ENCODE measurements at regions of chr18 and their contacts with region 1.

Region 1: GRCh38 chr18:23918401-23919032 is 96.0 kb upstream of the TTC39C start:
- DNase-seq: peak; percentile 92
- ATAC-seq: peak; percentile 94
- H3K4me3 Mint-ChIP-seq: no peak overlapping the region
- H3K27ac Mint-ChIP-seq: no peak overlapping the region
- H3K4me1 Mint-ChIP-seq: peaks cover 6% of the 10 kb centered on the region
- H3K27me3 Mint-ChIP-seq: no peaks in the 10 kb centered on the region
- CTCF ChIP-seq: peak; percentile 94

Region 2: DNA sequence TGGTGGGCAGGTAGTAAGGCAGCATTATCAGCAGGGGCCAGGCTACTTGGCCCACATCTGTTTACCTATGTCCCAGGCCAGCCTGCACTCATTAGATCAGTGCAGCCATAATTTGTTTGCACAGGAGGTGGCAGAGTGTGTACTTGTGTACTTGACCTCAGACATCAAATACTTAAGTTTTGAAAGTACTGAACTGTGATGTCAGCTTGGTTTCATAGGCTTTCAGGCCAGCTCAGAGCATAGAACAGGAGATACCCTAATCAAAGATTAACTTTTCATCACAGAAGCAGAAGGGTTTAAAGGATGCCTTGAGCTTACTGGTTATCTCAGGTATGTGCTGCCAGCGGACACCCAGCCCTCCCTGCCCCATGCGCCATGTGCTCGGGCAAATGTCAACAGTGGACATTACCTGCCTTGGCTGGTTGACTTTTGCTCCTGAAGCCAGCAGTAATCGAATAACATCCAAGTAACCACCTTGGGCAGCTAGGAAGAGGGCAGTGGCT is 289.0 kb before region 1 on chr18:
- CTCF ChIA-PET with region 1: interaction called, 6 read pairs
- POLR2A ChIA-PET with region 1: no interaction called
- intact Hi-C with region 1: loop called (anchors 10 kb)
- DNase-seq: no peak
- ATAC-seq: peak; percentile 34
- H3K4me3 Mint-ChIP-seq: no peak overlapping the region
- H3K27ac Mint-ChIP-seq: no peak overlapping the region
- H3K4me1 Mint-ChIP-seq: peaks cover 12% of the 10 kb centered on the region
- H3K27me3 Mint-ChIP-seq: no peaks in the 10 kb centered on the region
- CTCF ChIP-seq: no peak

Region 3: GRCh38 chr18:23668731-23669130 is 249.8 kb before region 1 on chr18:
- CTCF ChIA-PET with region 1: no interaction called
- POLR2A ChIA-PET with region 1: no interaction called
- intact Hi-C with region 1: no loop called
- DNase-seq: no peak
- ATAC-seq: no peak
- H3K4me3 Mint-ChIP-seq: no peak overlapping the region
- H3K27ac Mint-ChIP-seq: no peak overlapping the region
- H3K4me1 Mint-ChIP-seq: peaks cover 6% of the 10 kb centered on the region
- H3K27me3 Mint-ChIP-seq: peaks cover 7% of the 10 kb centered on the region
- CTCF ChIP-seq: no peak

Region 4: DNA sequence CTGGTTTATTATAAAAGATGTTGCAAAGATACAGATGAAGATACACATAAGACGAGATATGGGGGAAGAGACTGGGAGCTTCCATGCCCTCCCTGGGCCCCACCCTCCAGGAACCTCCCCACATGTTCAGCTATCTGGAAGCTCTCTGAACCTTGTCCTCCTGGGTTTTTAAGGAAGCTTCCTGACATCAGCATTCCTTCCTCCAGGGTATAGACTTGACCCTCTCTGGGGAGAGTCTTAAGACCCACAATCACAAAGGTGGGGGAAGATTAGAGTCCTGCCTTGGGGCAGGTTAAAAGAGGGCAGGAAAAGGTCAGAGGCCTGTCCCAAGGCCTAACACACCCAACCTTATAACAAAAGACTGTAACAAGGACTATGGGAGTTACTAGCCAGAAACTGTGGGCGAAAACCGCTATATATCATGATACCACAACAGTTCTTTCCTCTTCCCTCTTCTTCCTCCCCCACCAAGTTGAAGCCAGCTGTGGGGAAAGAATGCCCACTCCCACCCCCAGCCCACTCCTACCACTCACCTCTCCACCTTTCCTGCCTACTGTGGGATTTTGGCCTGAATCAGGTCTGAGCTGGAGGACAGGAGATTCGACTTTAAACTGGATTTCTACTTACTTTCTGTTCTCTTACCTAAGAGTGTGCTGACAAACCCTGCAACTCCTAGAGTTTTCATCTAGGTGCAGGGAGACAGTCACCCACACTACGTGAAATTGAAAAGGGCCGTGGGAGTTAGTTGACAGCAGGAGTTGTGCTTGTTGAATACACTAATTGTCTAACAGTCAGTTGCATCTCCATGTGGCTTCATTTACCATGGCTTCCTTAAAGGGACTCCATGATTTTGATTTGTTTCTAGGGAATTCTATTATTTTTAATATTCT is 124.3 kb before region 1 on chr18:
- CTCF ChIA-PET with region 1: no interaction called
- POLR2A ChIA-PET with region 1: no interaction called
- intact Hi-C with region 1: no loop called
- DNase-seq: no peak
- ATAC-seq: no peak
- H3K4me3 Mint-ChIP-seq: no peak overlapping the region
- H3K27ac Mint-ChIP-seq: no peak overlapping the region
- H3K4me1 Mint-ChIP-seq: peaks cover 3% of the 10 kb centered on the region
- H3K27me3 Mint-ChIP-seq: no peaks in the 10 kb centered on the region
- CTCF ChIP-seq: no peak

Region 5: DNA sequence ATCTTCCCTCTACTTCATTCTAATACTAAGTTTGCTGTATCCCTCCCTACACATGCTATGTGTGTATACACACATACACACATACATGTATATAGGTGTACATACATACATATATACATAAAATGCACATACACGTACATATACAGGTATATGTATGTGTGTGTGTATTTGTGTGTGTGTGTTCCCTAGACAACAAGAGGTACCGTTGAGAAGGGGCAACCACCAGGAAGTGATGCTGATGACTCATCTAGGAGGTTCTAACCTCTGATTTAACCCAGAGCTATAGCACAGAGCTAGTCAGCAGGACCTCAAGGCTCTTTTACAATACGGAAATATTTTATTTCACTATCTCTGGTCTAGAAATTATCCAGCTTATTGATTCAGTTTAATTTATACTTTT is 90.1 kb before region 1 on chr18:
- CTCF ChIA-PET with region 1: interaction called, 8 read pairs
- POLR2A ChIA-PET with region 1: no interaction called
- intact Hi-C with region 1: loop called (anchors 10 kb)
- DNase-seq: peak; percentile 64
- ATAC-seq: peak; percentile 97
- H3K4me3 Mint-ChIP-seq: no peak overlapping the region
- H3K27ac Mint-ChIP-seq: peak overlapping the region; percentile 65
- H3K4me1 Mint-ChIP-seq: peaks cover 40% of the 10 kb centered on the region
- H3K27me3 Mint-ChIP-seq: no peaks in the 10 kb centered on the region
- CTCF ChIP-seq: no peak

Region 6: DNA sequence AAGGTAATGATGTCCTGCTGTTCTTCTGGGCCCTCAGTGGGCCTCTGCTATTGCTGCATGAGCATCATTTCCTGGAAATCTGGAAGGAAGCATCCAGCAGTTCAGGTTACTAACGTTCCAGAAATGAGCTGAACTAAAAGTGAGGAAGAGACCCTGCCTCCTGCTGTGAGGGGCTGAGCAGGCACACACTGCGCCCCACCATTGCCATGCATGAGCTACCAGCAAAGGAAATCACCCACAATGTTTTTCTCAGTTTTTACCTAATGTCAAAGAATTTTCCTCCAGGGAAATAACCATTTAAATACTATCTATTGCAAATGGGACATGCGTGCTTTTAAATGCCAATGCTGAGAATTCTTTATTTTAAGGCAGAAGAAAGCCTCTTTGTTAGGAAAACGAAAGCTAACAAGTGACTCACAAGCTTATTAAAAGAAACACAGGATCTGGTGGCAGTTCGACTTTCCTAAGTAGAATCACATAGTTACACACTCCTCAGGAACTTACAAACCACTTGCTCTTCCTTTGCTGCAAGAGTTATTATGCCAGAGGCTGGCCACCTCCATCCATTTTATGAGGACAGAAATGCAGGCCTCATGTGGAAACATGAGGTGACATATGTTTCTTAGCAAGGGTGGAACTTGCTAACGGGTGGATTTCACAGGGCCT is 56.6 kb before region 1 on chr18:
- CTCF ChIA-PET with region 1: interaction called, 13 read pairs
- POLR2A ChIA-PET with region 1: no interaction called
- intact Hi-C with region 1: no loop called
- DNase-seq: no peak
- ATAC-seq: no peak
- H3K4me3 Mint-ChIP-seq: no peak overlapping the region
- H3K27ac Mint-ChIP-seq: peak overlapping the region; percentile 55
- H3K4me1 Mint-ChIP-seq: peaks cover 49% of the 10 kb centered on the region
- H3K27me3 Mint-ChIP-seq: no peaks in the 10 kb centered on the region
- CTCF ChIP-seq: no peak

Region 7: DNA sequence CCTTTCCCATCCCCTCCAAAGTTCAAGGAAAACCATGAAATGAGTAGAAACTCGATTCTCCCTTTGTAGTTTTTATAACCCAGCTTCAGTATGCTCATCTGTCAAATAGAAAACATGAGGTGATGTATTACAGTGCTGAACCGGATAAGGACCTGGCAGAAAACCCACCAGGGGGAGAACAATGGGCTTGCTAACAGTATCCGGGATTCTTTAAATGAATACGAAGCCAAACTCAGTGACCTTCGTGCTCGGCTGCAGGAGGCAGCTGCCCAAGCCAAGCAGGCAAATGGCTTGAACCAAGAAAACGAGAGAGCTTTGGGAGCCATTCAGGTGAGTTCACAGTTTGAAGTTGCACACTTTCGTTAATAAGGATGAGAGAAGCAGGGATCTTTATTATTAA is 17.5 kb before region 1 on chr18:
- CTCF ChIA-PET with region 1: interaction called, 20 read pairs
- POLR2A ChIA-PET with region 1: interaction called, 3 read pairs
- intact Hi-C with region 1: no loop called
- DNase-seq: peak; percentile 12
- ATAC-seq: no peak
- H3K4me3 Mint-ChIP-seq: no peak overlapping the region
- H3K27ac Mint-ChIP-seq: no peak overlapping the region
- H3K4me1 Mint-ChIP-seq: peaks cover 6% of the 10 kb centered on the region
- H3K27me3 Mint-ChIP-seq: no peaks in the 10 kb centered on the region
- CTCF ChIP-seq: no peak

Region 8: DNA sequence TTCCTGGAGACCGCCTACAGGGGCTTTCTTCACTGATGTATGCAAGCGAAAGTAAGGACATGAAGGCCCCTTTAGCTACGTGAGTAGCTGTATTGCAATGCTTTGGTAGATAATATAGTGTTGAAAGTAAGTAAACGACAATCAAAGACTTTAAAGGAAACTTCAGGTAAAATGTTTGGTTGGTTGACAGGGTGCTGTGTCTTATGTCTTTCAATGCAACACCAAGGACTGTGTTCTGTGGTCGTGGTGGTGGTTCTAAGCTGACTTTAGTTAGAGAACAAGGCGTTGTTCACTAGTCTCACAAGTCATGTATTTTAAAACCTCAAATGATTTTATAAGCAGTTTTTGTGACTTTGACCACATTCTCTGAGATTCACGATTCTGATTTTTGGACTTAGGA is 162.3 kb after region 1 on chr18:
- CTCF ChIA-PET with region 1: interaction called, 18 read pairs
- POLR2A ChIA-PET with region 1: no interaction called
- intact Hi-C with region 1: no loop called
- DNase-seq: peak; percentile 70
- ATAC-seq: peak; percentile 22
- H3K4me3 Mint-ChIP-seq: peak overlapping the region; percentile 31
- H3K27ac Mint-ChIP-seq: peak overlapping the region; percentile 84
- H3K4me1 Mint-ChIP-seq: peaks cover 60% of the 10 kb centered on the region
- H3K27me3 Mint-ChIP-seq: no peaks in the 10 kb centered on the region
- CTCF ChIP-seq: no peak

Measured in activated CD8-positive, alpha-beta T cell treated with anti-CD3 and anti-CD28 coated beads for 36 hours (primary cell).